Activated CD4-positive, alpha-beta memory T cell treated with anti-CD3 and anti-CD28 coated beads, Interleukin-2, amount 10 ng/mL, durations not matched to agents 7 days and 5 days (primary cell): ENCODE measurements at regions of chr18 and their contacts with region 1.

Region 1: GRCh38 chr18:58671111-58671631 is at the start of gene MALT1:
- DNase-seq: peak; percentile 96
- H3K4me3 Mint-ChIP-seq: peak within 1 kb of the TSS; percentile 92
- H3K27ac Mint-ChIP-seq: peak within 1 kb of the TSS; percentile 93
- H3K4me1 Mint-ChIP-seq: peaks cover 59% of the 10 kb centered on the region
- H3K27me3 Mint-ChIP-seq: no peaks in the 10 kb centered on the region
- total RNA-seq, gene MALT1: 41.0 to 43.0 TPM

Region 2: GRCh38 chr18:58529714-58530354 is 141.3 kb before region 1 on chr18:
- CTCF ChIA-PET with region 1: interaction called, 8 read pairs
- POLR2A ChIA-PET with region 1: interaction called, 10 read pairs
- DNase-seq: peak; percentile 63
- H3K4me3 Mint-ChIP-seq: no peak overlapping the region
- H3K27ac Mint-ChIP-seq: no peak overlapping the region
- H3K4me1 Mint-ChIP-seq: peaks cover 4% of the 10 kb centered on the region
- H3K27me3 Mint-ChIP-seq: peaks cover 26% of the 10 kb centered on the region

Region 3: DNA sequence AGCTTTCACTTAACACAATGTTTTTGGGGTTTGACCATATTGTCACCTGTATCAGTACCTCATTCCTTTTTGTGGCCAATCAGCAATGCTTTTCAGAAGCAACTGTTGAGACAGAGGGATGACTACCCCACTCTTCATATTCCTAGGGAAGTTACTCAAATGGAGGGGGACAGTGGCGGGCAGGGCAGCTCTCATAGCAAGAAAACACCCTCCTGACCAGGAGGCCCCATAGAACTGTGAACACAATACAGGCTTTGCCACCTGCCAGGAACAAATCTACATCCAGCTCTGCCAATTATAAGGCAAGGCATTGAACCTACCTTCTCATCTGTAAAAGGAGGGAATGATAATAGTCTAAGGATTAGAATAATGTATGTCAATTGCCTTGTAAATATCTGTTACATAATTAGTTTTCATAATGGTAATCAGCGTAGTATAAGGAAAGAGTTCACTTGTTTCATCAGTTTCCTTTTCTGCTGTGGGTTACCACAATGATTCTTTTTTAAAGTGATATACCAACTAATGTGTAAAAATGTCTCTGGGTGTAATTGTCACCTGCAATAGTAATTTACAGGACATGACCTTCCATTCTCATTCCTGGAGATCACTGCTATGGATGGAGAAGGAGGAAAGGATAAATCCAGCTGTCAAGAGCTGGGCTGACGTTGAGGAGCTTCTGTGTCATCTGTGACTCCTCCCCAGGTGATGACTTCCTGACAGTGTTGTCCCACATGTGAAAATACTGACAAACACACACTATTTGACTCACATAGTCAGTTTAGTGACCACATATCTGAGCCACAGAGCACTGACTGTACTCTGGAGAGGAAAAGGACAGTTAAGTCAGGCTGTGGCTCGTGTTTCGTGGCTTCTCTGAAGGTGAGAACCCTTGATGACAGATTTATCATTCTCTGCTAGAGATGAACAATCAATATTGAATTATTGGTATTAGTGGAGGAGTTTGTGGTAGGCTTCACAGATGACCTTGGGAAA is 55.7 kb before region 1 on chr18:
- CTCF ChIA-PET with region 1: interaction called, 7 read pairs
- POLR2A ChIA-PET with region 1: interaction called, 21 read pairs
- DNase-seq: peak; percentile 80
- H3K4me3 Mint-ChIP-seq: peak overlapping the region; percentile 54
- H3K27ac Mint-ChIP-seq: peak overlapping the region; percentile 85
- H3K4me1 Mint-ChIP-seq: peaks cover 28% of the 10 kb centered on the region
- H3K27me3 Mint-ChIP-seq: peaks cover 9% of the 10 kb centered on the region

Region 4: DNA sequence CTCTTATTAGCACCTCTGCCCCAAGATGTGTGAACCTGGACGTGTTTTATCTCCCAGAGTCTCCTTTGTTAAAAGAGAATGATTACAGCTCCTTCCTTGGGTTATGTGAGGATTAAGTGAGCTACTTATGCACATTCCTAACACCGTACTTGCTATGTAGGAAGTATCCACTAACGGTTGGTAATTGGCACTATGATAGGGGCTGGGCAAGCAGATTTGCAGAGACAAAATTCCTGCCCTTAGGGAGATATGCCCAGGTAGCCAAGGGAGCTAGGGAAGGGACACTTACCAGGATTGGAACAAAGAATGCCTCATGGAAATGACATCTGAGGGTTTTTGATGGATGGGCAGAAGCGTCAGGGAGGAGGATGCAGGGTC is 30.8 kb before region 1 on chr18:
- CTCF ChIA-PET with region 1: no interaction called
- POLR2A ChIA-PET with region 1: no interaction called
- DNase-seq: no peak
- H3K4me3 Mint-ChIP-seq: no peak overlapping the region
- H3K27ac Mint-ChIP-seq: no peak overlapping the region
- H3K4me1 Mint-ChIP-seq: peaks cover 9% of the 10 kb centered on the region
- H3K27me3 Mint-ChIP-seq: no peaks in the 10 kb centered on the region

Region 5: GRCh38 chr18:58687871-58688308 is 16.7 kb after region 1 on chr18:
- CTCF ChIA-PET with region 1: interaction called, 12 read pairs
- POLR2A ChIA-PET with region 1: interaction called, 63 read pairs
- DNase-seq: peak; percentile 69
- H3K4me3 Mint-ChIP-seq: peak overlapping the region; percentile 65
- H3K27ac Mint-ChIP-seq: peak overlapping the region; percentile 92
- H3K4me1 Mint-ChIP-seq: peaks cover 52% of the 10 kb centered on the region
- H3K27me3 Mint-ChIP-seq: no peaks in the 10 kb centered on the region

Region 6: GRCh38 chr18:58754544-58755068 is 83.4 kb after region 1 on chr18:
- CTCF ChIA-PET with region 1: no interaction called
- POLR2A ChIA-PET with region 1: interaction called, 11 read pairs
- DNase-seq: no peak
- H3K4me3 Mint-ChIP-seq: no peak overlapping the region
- H3K27ac Mint-ChIP-seq: no peak overlapping the region
- H3K4me1 Mint-ChIP-seq: peaks cover 2% of the 10 kb centered on the region
- H3K27me3 Mint-ChIP-seq: peaks cover 7% of the 10 kb centered on the region